ENCODE measurements at regions of chr6 and their contacts with region 1.

Region 1: DNA sequence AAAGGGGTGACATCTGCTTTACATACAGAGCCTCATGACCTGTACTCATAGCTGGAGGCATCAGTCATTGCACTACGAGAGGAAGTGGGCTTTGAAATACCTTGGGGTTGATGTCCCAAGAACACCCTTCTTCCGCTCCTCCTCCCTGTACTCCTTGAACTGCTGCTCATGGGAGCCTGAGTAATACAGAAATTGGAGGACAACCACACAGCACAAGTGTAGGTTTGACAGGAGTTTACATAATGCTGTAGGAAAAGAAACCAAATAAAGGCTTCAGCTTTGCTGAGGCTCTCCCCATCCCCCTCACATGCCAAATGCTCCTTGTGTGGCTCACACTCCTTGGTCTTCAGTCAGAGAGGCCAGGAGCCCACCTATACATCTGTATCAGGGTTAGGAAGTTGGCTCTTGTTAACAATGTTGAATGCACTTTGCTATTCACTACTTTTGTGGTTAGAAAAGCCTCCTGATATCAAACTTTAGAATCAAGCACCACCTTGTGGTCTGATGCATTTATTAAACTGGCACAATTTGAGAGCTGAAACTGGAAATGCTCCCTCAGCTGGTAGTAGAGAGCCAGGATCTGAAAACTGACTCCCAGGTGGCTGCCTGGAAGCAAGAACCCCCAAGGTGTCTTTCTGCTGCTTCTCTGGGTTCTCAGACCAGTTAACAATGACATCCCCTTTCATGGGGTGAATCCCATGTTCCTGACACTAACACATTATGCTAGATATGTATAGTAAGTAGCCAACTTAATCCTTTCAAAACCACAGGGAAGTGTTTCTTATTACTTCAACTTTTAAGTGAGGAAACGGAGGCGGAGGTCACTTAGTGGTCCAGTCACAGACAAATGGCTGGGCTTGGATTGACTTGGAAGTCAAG is 56.2 kb upstream of the EDN1 start:
- DNase-seq: no peak
- H3K4me3 ChIP-seq: peak overlapping the region in 1 of 8 donors; percentile 36
- H3K27ac ChIP-seq: peak overlapping the region in 6 of 8 donors; percentile 52 to 71 (median 62)
- H3K4me1 ChIP-seq: peaks cover 18 to 44% (median 25%) of the 10 kb centered on the region in 6 donors
- H3K27me3 ChIP-seq: no peaks in the 10 kb centered on the region
- CTCF ChIP-seq: peak; percentile 42 to 93 (median 72)
- POLR2A ChIP-seq: no peak

Region 2: GRCh38 chr6:11585426-11586016 is 648.4 kb before region 1 on chr6:
- intact Hi-C with region 1: loop called (anchors 10 kb)
- DNase-seq: no peak
- H3K4me3 ChIP-seq: no peak overlapping the region
- H3K27ac ChIP-seq: no peak overlapping the region
- H3K4me1 ChIP-seq: peaks cover 0 to 32% (median 5%) of the 10 kb centered on the region in 6 donors
- H3K27me3 ChIP-seq: no peaks in the 10 kb centered on the region
- CTCF ChIP-seq: peak in 10 of 11 experiments; percentile 10 to 76 (median 59)
- POLR2A ChIP-seq: no peak